ENCODE measurements at regions of chr7 and their contacts with region 1.

Region 1: GRCh38 chr7:23546897-23547572 is 15.3 kb upstream of the TRA2A start:
- DNase-seq: peak; percentile 81 to 93 (median 82)
- ATAC-seq: peak; percentile 87
- H3K4me3 ChIP-seq: no peak overlapping the region
- H3K27ac ChIP-seq: no peak overlapping the region
- H3K4me1 ChIP-seq: peaks cover 0 to 6% of the 10 kb centered on the region in 2 experiments; a peak in 2 of 5 replicates
- H3K27me3 ChIP-seq: no peaks in the 10 kb centered on the region; a peak in 1 of 5 replicates
- CTCF ChIP-seq: peak; percentile 94 to 99 (median 98)
- EP300 ChIP-seq: no peak
- POLR2A ChIP-seq: no peak
- RAD21 ChIP-seq: peak; percentile 94

Region 2: GRCh38 chr7:22995011-22995410 is 552.0 kb before region 1 on chr7:
- CTCF ChIA-PET with region 1: no interaction called
- POLR2A ChIA-PET with region 1: no interaction called
- in situ Hi-C with region 1: no loop called
- intact Hi-C with region 1: no loop called
- DNase-seq: no peak
- ATAC-seq: peak; percentile 58
- H3K4me3 ChIP-seq: no peak overlapping the region
- H3K27ac ChIP-seq: no peak overlapping the region
- H3K4me1 ChIP-seq: peaks cover 0 to 13% of the 10 kb centered on the region in 2 experiments; a peak in 2 of 5 replicates
- H3K27me3 ChIP-seq: no peaks in the 10 kb centered on the region
- CTCF ChIP-seq: no peak
- EP300 ChIP-seq: no peak
- POLR2A ChIP-seq: no peak
- RAD21 ChIP-seq: no peak

Region 3: DNA sequence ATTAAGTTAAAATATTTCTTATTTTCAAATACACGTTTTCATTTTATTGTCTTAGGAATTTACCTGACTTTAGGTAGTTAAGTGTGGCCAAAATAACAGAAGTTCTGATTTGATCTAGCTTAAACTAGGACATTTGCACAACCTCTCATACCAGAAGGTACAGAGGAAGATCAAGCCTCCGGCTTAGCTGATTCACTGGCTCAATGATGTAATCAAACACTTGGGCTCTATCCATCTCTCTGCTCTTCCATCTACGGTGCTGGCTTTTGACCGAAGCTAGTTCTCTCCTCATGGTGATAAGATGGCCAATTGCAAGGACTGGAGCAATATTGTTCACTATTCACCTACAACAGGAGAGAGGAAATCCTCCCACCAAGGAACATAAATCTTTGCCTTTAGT is 520.9 kb before region 1 on chr7:
- CTCF ChIA-PET with region 1: no interaction called
- POLR2A ChIA-PET with region 1: no interaction called
- in situ Hi-C with region 1: no loop called
- intact Hi-C with region 1: no loop called
- DNase-seq: no peak
- ATAC-seq: peak; percentile 50
- H3K4me3 ChIP-seq: no peak overlapping the region
- H3K27ac ChIP-seq: no peak overlapping the region
- H3K4me1 ChIP-seq: peaks cover 4 to 9% of the 10 kb centered on the region in 2 experiments; a peak in 2 of 5 replicates
- H3K27me3 ChIP-seq: no peaks in the 10 kb centered on the region
- CTCF ChIP-seq: no peak
- EP300 ChIP-seq: no peak
- POLR2A ChIP-seq: no peak
- RAD21 ChIP-seq: no peak

Region 4: DNA sequence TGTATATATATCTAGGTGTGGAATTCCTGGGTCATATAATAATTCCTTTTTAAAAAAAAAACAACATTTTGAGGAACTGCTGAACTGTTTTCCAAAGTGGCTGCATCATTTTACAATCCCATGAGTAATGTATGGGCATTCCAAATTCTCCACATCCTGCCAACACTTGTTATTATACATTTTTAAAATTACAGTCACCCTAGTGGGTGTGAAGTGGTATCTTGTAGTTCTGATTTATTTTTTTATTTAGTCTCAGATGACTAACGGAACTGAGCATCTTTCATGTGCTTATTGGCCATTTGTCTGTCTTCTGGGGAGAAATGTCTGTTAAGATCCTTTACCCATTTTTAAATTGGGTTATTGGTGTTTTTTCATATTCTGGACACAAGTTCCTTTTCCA is 453.5 kb before region 1 on chr7:
- CTCF ChIA-PET with region 1: no interaction called
- POLR2A ChIA-PET with region 1: no interaction called
- in situ Hi-C with region 1: no loop called
- intact Hi-C with region 1: loop called (anchors 10 kb)
- DNase-seq: no peak
- ATAC-seq: no peak
- H3K4me3 ChIP-seq: no peak overlapping the region
- H3K27ac ChIP-seq: no peak overlapping the region
- H3K4me1 ChIP-seq: peaks cover 0 to 3% of the 10 kb centered on the region in 2 experiments; a peak in 1 of 5 replicates
- H3K27me3 ChIP-seq: no peaks in the 10 kb centered on the region
- CTCF ChIP-seq: no peak
- EP300 ChIP-seq: no peak
- POLR2A ChIP-seq: no peak
- RAD21 ChIP-seq: no peak

Region 5: GRCh38 chr7:23357190-23358093 is 189.6 kb before region 1 on chr7:
- CTCF ChIA-PET with region 1: interaction called, 25 read pairs
- POLR2A ChIA-PET with region 1: no interaction called
- in situ Hi-C with region 1: no loop called
- intact Hi-C with region 1: loop called (anchors 1 kb)
- DNase-seq: peak; percentile 41 to 53 (median 51)
- ATAC-seq: peak; percentile 87
- H3K4me3 ChIP-seq: no peak overlapping the region
- H3K27ac ChIP-seq: peak overlapping the region; percentile 42; the same call in 1 of the 3 replicates
- H3K4me1 ChIP-seq: peaks cover 0 to 8% of the 10 kb centered on the region in 2 experiments; a peak in 2 of 5 replicates
- H3K27me3 ChIP-seq: no peaks in the 10 kb centered on the region
- CTCF ChIP-seq: peak; percentile 35 to 69 (median 43); a peak in 4 of 6 replicates
- EP300 ChIP-seq: no peak
- POLR2A ChIP-seq: no peak
- RAD21 ChIP-seq: peak; percentile 55 to 74

Region 6: GRCh38 chr7:23431702-23432199 is 115.3 kb before region 1 on chr7:
- CTCF ChIA-PET with region 1: interaction called, 28 read pairs
- POLR2A ChIA-PET with region 1: no interaction called
- in situ Hi-C with region 1: no loop called
- intact Hi-C with region 1: loop called (anchors 1 kb)
- DNase-seq: peak; percentile 41 to 56 (median 52)
- ATAC-seq: peak; percentile 62
- H3K4me3 ChIP-seq: no peak overlapping the region
- H3K27ac ChIP-seq: peak overlapping the region; percentile 41; the same call in 1 of the 3 replicates
- H3K4me1 ChIP-seq: peaks cover 11 to 48% of the 10 kb centered on the region in 2 experiments; a peak in 4 of 5 replicates
- H3K27me3 ChIP-seq: no peaks in the 10 kb centered on the region
- CTCF ChIP-seq: no peak
- EP300 ChIP-seq: peak; percentile 16; the same call in 1 of the 2 replicates
- POLR2A ChIP-seq: no peak
- RAD21 ChIP-seq: no peak

Region 7: GRCh38 chr7:23570592-23571200 is 23.7 kb after region 1 on chr7:
- CTCF ChIA-PET with region 1: interaction called, 5 read pairs
- POLR2A ChIA-PET with region 1: no interaction called
- in situ Hi-C with region 1: no loop called
- intact Hi-C with region 1: loop called (anchors 1 kb)
- DNase-seq: peak; percentile 62 to 86 (median 69)
- ATAC-seq: peak; percentile 98
- H3K4me3 ChIP-seq: no peak overlapping the region
- H3K27ac ChIP-seq: no peak overlapping the region
- H3K4me1 ChIP-seq: peaks cover 0 to 5% of the 10 kb centered on the region in 2 experiments; a peak in 2 of 5 replicates
- H3K27me3 ChIP-seq: no peaks in the 10 kb centered on the region
- CTCF ChIP-seq: peak; percentile 82 to 91 (median 87)
- EP300 ChIP-seq: no peak
- POLR2A ChIP-seq: no peak
- RAD21 ChIP-seq: peak; percentile 96 to 98

Region 8: GRCh38 chr7:23628370-23628769 is 81.3 kb after region 1 on chr7:
- CTCF ChIA-PET with region 1: no interaction called
- POLR2A ChIA-PET with region 1: no interaction called
- in situ Hi-C with region 1: no loop called
- intact Hi-C with region 1: no loop called
- DNase-seq: no peak
- ATAC-seq: no peak
- H3K4me3 ChIP-seq: no peak overlapping the region
- H3K27ac ChIP-seq: no peak overlapping the region
- H3K4me1 ChIP-seq: no peaks in the 10 kb centered on the region
- H3K27me3 ChIP-seq: no peaks in the 10 kb centered on the region; a peak in 1 of 5 replicates
- CTCF ChIP-seq: no peak
- EP300 ChIP-seq: no peak
- POLR2A ChIP-seq: no peak
- RAD21 ChIP-seq: no peak